ENCODE measurements at regions of chr2 and their contacts with region 1.

Region 1: GRCh38 chr2:196263181-196263747 is 91.9 kb upstream of the STK17B start:
- DNase-seq: peak; percentile 75
- H3K4me3 Mint-ChIP-seq: peak overlapping the region; percentile 74
- H3K27ac Mint-ChIP-seq: peak overlapping the region; percentile 87
- H3K4me1 Mint-ChIP-seq: peaks cover 84% of the 10 kb centered on the region
- H3K27me3 Mint-ChIP-seq: no peaks in the 10 kb centered on the region

Region 2: GRCh38 chr2:196166876-196167275 is 96.4 kb before region 1 on chr2:
- CTCF ChIA-PET with region 1: interaction called, 12 read pairs
- POLR2A ChIA-PET with region 1: interaction called, 7 read pairs
- DNase-seq: peak; percentile 55
- H3K4me3 Mint-ChIP-seq: peak overlapping the region; percentile 95
- H3K27ac Mint-ChIP-seq: peak overlapping the region; percentile 96
- H3K4me1 Mint-ChIP-seq: peaks cover 32% of the 10 kb centered on the region
- H3K27me3 Mint-ChIP-seq: no peaks in the 10 kb centered on the region

Region 3: GRCh38 chr2:196239622-196240587 is 23.4 kb before region 1 on chr2:
- CTCF ChIA-PET with region 1: interaction called, 135 read pairs
- POLR2A ChIA-PET with region 1: interaction called, 3 read pairs
- DNase-seq: peak; percentile 91
- H3K4me3 Mint-ChIP-seq: peak overlapping the region; percentile 40
- H3K27ac Mint-ChIP-seq: peak overlapping the region; percentile 89
- H3K4me1 Mint-ChIP-seq: peaks cover 86% of the 10 kb centered on the region
- H3K27me3 Mint-ChIP-seq: no peaks in the 10 kb centered on the region

Region 4: DNA sequence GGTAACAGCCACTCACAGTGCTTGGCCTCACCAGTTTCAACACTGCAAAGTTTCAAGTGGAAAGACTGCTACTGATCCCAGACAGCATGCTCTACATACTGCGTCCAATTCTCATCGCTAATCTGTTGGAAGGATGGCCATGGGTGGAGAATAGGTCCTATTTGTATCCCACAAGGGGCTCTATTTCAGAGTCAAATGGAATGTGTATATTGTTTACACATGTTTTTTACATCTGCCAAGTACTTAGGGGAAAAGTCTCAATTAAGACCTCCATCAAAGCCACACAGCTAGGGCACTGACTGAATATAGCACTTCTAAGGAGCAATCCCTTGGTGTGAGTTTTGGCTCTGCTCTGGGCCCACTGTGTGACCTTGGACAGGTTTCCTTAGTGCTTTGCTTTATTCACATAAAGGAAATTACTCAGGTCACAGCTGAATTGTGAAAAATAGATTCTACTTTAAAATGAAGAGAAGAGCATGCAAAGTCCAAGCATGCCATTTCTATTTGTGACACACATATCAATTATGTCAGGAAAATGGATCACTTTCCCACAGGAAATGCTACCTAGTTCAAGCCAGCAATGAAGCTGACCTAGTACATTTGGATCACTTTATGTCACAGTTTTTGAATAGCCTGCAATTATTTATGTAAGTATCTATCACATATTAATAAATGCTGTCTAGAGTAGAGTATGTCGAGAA is 21.0 kb after region 1 on chr2:
- CTCF ChIA-PET with region 1: no interaction called
- POLR2A ChIA-PET with region 1: no interaction called
- DNase-seq: no peak
- H3K4me3 Mint-ChIP-seq: no peak overlapping the region
- H3K27ac Mint-ChIP-seq: no peak overlapping the region
- H3K4me1 Mint-ChIP-seq: peaks cover 46% of the 10 kb centered on the region
- H3K27me3 Mint-ChIP-seq: no peaks in the 10 kb centered on the region